ENCODE measurements at regions of chr16 and their contacts with region 1.

Region 1: GRCh38 chr16:85086347-85087291 is 25.7 kb downstream of the CIBAR2 start:
- DNase-seq: peak in 4 of 5 donors; percentile 64 to 85 (median 77)
- ATAC-seq: peak; percentile 25 to 64 (median 62)
- H3K4me3 ChIP-seq: no peak overlapping the region
- H3K27ac ChIP-seq: no peak overlapping the region
- H3K4me1 ChIP-seq: peaks cover 0 to 31% (median 13%) of the 10 kb centered on the region in 12 donors
- H3K27me3 ChIP-seq: no peaks in the 10 kb centered on the region
- CTCF ChIP-seq: peak; percentile 57 to 82 (median 66)
- POLR2A ChIP-seq: no peak

Region 2: DNA sequence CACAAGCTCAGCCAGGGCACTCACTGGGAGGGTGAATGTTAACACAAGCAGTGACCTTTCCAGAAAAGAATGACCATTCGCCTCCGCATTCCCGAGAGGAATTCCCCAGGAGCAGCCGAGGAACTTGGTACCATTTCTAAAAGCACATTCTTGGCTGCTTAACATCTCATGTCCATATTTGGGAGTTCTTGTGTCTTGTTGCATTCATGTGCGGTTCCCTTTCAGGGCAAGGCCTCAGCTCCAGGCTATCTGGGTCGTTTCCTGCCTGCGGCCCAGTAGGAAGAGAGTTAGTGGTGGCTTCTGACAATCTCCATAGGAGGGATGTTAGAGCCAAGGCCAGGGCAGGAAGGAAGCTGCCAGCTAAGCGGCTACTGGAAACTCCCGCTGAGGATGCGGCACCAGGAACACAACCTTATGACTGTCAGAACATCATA is 554.3 kb before region 1 on chr16:
- intact Hi-C with region 1: no loop called
- DNase-seq: peak; percentile 52 to 76 (median 71)
- ATAC-seq: peak; percentile 63 to 93 (median 91)
- H3K4me3 ChIP-seq: no peak overlapping the region
- H3K27ac ChIP-seq: peak overlapping the region; percentile 46 to 84 (median 62)
- H3K4me1 ChIP-seq: peaks cover 12 to 42% (median 30%) of the 10 kb centered on the region in 12 donors
- H3K27me3 ChIP-seq: no peaks in the 10 kb centered on the region
- CTCF ChIP-seq: no peak
- POLR2A ChIP-seq: no peak

Region 3: GRCh38 chr16:84754353-84754856 is 332.2 kb before region 1 on chr16:
- intact Hi-C with region 1: loop called in 4 of 10 experiments (anchors 10 kb)
- DNase-seq: peak in 3 of 5 donors; percentile 46 to 62 (median 60)
- ATAC-seq: peak in 3 of 4 donors; percentile 75 to 82 (median 78)
- H3K4me3 ChIP-seq: no peak overlapping the region
- H3K27ac ChIP-seq: peak overlapping the region in 1 of 12 donors; percentile 54
- H3K4me1 ChIP-seq: peaks cover 0 to 66% (median 16%) of the 10 kb centered on the region in 12 donors
- H3K27me3 ChIP-seq: no peaks in the 10 kb centered on the region
- CTCF ChIP-seq: peak; percentile 75 to 90 (median 84)
- POLR2A ChIP-seq: no peak

Region 4: GRCh38 chr16:84985079-84986065 is 101.2 kb before region 1 on chr16:
- intact Hi-C with region 1: loop called in 3 of 10 experiments (anchors 5 to 10 kb)
- DNase-seq: peak in 1 of 5 donors; percentile 54
- ATAC-seq: no peak
- H3K4me3 ChIP-seq: no peak overlapping the region
- H3K27ac ChIP-seq: peak overlapping the region in 2 of 12 donors; percentile 69 to 75
- H3K4me1 ChIP-seq: peaks cover 0 to 54% (median 7%) of the 10 kb centered on the region in 12 donors
- H3K27me3 ChIP-seq: no peaks in the 10 kb centered on the region
- CTCF ChIP-seq: no peak
- POLR2A ChIP-seq: no peak

Region 5: DNA sequence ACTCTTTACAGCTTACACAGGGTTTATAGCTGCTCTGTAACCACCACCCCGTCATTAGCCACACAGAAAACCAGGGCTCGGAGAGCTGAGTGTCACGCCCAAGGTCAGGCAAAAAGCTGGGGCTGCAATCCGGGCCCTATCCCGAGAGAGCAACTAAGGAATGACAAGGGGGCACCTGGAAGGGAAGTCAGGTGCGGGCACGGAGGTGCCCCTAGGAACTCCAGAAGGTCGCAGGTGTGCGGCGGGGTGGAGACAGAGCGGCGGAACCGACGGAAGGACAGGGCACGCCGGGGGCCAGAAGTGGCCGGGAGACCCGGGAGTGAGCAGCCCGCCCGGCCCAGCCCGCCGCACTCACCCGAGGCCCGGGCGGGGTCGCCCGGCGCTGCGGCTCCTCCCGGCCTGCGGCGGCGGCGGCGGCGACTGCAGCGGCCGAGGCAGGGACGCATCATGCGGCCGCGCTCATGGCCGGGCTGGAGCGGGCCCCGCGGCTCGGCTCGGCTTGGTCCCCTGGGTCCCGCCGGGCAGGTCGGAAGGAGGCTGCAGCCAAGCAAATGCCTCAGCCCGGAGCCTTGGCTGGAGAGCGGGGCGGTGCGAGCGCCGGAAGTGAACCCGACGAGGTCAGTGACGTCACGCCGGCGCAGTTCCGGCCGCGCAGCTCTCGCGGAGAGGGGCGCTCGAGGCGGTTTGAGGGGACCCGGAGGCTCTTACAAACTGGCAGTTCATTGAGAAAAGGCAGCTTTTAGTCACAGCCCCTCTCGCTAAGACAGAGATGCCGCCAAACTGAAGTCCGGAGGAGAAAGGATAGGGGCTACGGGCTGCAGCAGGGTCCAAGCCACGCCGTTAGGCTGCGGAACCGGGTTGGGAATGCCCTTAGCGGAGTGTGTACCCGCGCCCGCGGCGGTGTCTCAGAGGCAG is 75.4 kb before region 1 on chr16 and contains the start of gene ZDHHC7:
- intact Hi-C with region 1: loop called in 1 of 10 experiments (anchors 5 kb)
- DNase-seq: peak; percentile 91 to 95 (median 92)
- ATAC-seq: peak; percentile 90 to 97 (median 96)
- H3K4me3 ChIP-seq: peak within 1 kb of the TSS; percentile 75 to 99 (median 90)
- H3K27ac ChIP-seq: peak within 1 kb of the TSS; percentile 90 to 99 (median 96)
- H3K4me1 ChIP-seq: peaks cover 6 to 69% (median 29%) of the 10 kb centered on the region in 12 donors
- H3K27me3 ChIP-seq: no peaks in the 10 kb centered on the region
- CTCF ChIP-seq: peak in 3 of 12 donors; percentile 15 to 27 (median 27)
- POLR2A ChIP-seq: peak; percentile 43 to 87
- total RNA-seq, gene ZDHHC7: 32.9 to 66.7 (median 44.7) TPM

Region 6: DNA sequence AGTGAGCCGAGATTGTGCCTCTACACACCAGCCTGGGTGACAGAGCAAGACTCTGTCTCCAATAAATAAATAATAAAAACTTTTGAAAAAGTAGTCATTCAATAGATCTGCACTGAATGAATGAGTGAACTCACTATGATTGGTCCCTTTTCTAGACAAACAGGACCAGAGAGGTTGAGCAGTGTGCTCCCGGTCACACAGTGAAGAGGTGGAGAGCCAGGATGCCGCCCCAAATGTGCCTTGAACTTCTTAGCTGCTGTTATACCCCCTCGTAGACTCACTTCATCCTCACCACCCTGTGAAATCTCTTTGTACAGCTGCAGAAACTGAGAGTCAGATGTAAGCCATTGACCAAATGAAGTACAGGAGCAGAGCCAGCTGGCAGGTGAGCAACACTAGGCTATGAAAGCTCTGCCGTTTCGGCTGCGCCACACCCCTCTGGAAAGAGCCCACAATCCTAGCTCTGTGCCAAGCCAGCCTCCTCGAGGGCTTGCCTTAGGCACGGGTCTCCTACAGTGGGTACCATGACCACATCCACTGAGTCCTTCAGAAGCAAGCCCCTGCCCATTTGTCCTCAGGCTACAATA is 66.9 kb before region 1 on chr16:
- intact Hi-C with region 1: loop called in 2 of 10 experiments (anchors 5 kb)
- DNase-seq: peak in 1 of 5 donors; percentile 64
- ATAC-seq: peak; percentile 24 to 79 (median 72)
- H3K4me3 ChIP-seq: no peak overlapping the region
- H3K27ac ChIP-seq: no peak overlapping the region
- H3K4me1 ChIP-seq: peaks cover 0 to 25% (median 0%) of the 10 kb centered on the region in 12 donors
- H3K27me3 ChIP-seq: no peaks in the 10 kb centered on the region
- CTCF ChIP-seq: no peak
- POLR2A ChIP-seq: no peak

Region 7: DNA sequence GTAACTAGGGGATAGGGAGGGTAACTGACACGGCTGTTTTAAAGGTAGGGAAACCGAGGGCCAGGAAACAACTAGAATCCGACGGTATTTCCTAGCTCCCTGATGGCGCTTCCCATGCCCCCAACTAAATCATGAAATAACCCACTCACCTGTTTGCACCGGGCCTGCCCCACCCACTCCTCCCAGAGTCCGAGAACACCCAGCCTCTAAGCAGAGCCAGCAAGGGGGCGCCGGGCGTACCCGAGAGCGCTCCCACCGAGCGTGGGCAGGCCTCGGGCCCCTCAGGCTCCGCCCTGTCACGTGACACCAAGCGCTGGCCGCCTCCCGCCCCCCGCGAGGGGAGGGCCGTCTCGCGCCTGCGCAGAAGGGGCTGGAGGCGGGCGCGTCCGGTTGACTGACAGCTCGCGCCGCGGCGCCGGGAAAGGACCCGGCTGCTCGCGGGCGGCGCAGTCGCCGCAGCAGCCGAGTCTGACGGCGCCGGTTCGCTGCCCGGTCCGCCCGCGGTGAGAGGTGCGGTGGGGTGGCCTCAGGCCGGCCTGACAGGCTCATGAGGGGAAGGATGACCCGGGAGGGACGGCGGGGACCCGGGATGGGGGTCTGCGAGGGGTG is 59.2 kb before region 1 on chr16 and contains the start of gene KIAA0513:
- intact Hi-C with region 1: loop called in 3 of 10 experiments (anchors 2 to 5 kb)
- DNase-seq: peak; percentile 94 to 98 (median 95)
- ATAC-seq: peak; percentile 68 to 91 (median 88)
- H3K4me3 ChIP-seq: peak within 1 kb of the TSS; percentile 55 to 98 (median 80)
- H3K27ac ChIP-seq: peak within 1 kb of the TSS; percentile 24 to 92 (median 79)
- H3K4me1 ChIP-seq: peaks cover 3 to 49% (median 15%) of the 10 kb centered on the region in 12 donors
- H3K27me3 ChIP-seq: no peaks in the 10 kb centered on the region
- CTCF ChIP-seq: peak in 7 of 12 donors; percentile 30 to 55 (median 37)
- POLR2A ChIP-seq: peak in 1 of 2 donors; percentile 98
- total RNA-seq, gene KIAA0513: 4.8 to 14.0 (median 10.0) TPM

Region 8: DNA sequence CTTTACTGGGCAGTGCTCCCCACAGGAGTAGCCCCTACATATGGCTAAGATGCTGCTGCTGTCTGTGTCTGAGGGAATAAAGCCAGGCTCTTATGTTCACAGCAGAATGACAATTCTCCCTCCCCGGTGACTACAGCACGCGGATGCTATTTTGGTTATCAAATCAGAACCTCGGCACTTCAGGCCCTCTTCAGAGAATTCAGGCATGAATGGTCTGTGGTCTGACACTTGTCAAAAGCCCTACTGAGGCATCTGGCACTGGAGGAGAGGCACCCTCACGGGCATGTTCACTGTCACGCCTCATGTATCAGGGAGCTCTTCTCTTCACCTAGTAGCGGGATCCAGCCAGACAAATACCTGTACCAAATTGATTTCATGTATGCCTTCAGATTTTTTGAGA is 28.7 kb before region 1 on chr16:
- intact Hi-C with region 1: loop called in 1 of 10 experiments (anchors 2 kb)
- DNase-seq: peak in 2 of 5 donors; percentile 54 to 57
- ATAC-seq: peak; percentile 27 to 78 (median 60)
- H3K4me3 ChIP-seq: no peak overlapping the region
- H3K27ac ChIP-seq: peak overlapping the region in 1 of 12 donors; percentile 44
- H3K4me1 ChIP-seq: peaks cover 0 to 55% (median 17%) of the 10 kb centered on the region in 12 donors
- H3K27me3 ChIP-seq: no peaks in the 10 kb centered on the region
- CTCF ChIP-seq: no peak
- POLR2A ChIP-seq: no peak

Measured in heart left ventricle (tissue), 16 donors.